ENCODE measurements at regions of chr7 and their contacts with region 1.

Region 1: DNA sequence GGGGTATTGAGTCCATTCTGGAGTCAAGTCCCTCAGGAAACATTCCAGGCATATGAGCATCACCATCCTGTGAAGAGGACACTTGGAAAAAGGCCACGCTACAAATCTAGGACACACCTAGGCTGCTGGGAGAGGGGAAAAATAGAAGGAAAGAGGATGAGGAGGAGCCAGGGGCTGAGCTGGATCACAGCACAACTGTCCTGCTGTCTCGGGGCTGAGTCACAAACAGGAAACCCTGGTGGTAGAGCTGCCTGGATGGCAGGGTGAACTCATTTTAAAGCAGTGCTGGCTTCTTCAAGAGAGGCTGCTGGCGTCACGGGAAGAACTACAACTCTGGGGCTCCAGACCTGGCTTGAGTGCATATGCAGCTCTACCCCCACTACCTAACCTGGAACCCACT is 151.5 kb downstream of the RNF216 start:
- DNase-seq: peak; percentile 86
- H3K4me3 ChIP-seq: no peak overlapping the region
- H3K27ac ChIP-seq: peak overlapping the region; percentile 82
- H3K4me1 ChIP-seq: peaks cover 29% of the 10 kb centered on the region
- H3K27me3 ChIP-seq: no peaks in the 10 kb centered on the region
- CTCF ChIP-seq: peak in 1 of 2 donors; percentile 9

Region 2: GRCh38 chr7:5580714-5581395 is 49.1 kb before region 1 on chr7:
- CTCF ChIA-PET with region 1: no interaction called
- dilution Hi-C with region 1: no loop called
- in situ Hi-C with region 1: no loop called
- intact Hi-C with region 1: no loop called
- DNase-seq: no peak
- H3K4me3 ChIP-seq: no peak overlapping the region
- H3K27ac ChIP-seq: no peak overlapping the region
- H3K4me1 ChIP-seq: no peaks in the 10 kb centered on the region
- H3K27me3 ChIP-seq: no peaks in the 10 kb centered on the region
- CTCF ChIP-seq: no peak

Region 3: DNA sequence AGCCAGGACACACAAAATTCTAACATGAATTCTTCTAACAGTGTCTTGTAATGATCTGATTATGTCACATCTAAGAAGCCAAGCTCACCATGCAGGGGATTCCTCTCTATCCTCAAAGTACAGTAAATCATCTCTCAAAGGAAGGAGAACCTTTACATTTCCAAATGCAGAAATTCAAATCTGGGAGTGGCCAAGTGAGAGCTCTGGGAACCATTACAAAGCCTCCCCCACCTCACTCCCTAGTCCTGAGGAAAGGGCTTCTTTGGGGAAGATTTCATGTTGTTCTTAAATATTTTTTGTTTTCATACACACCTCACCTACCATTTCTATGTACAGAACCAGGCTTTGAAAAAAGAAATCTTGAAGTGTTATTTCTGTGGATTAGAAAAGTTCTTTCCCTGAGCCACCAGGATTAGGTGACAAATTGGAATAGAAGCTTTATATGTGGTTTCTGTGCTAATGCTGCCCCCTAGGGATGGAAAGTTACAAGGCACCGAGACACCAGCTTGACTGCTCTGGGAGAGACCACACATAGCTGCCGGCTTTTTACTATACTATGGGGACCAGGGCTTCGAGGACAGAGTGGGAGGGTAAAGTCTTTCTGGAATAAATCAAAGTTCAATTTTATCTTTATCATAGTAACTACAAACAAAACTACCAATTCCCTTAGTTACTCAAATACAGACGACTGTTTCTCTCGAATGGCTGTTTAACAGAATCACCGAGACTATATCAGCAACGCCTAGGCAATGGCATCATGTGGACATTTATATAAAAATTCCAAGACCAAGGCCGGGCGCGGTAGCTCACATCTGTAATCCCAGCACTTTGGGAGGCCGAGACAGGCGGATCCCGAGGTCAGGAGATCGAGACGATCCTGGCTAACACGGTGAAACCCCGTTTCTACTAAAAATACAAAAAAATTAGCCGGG is 35.4 kb after region 1 on chr7:
- CTCF ChIA-PET with region 1: no interaction called
- dilution Hi-C with region 1: loop called (anchors 5 kb)
- in situ Hi-C with region 1: no loop called
- intact Hi-C with region 1: loop called (anchors 1 kb)
- DNase-seq: peak; percentile 61
- H3K4me3 ChIP-seq: no peak overlapping the region
- H3K27ac ChIP-seq: no peak overlapping the region
- H3K4me1 ChIP-seq: no peaks in the 10 kb centered on the region
- H3K27me3 ChIP-seq: no peaks in the 10 kb centered on the region
- CTCF ChIP-seq: peak; percentile 87 to 89

Region 4: GRCh38 chr7:5689118-5689517 is 59.2 kb after region 1 on chr7:
- CTCF ChIA-PET with region 1: no interaction called
- dilution Hi-C with region 1: no loop called
- in situ Hi-C with region 1: no loop called
- intact Hi-C with region 1: no loop called
- DNase-seq: no peak
- H3K4me3 ChIP-seq: no peak overlapping the region
- H3K27ac ChIP-seq: no peak overlapping the region
- H3K4me1 ChIP-seq: peaks cover 47% of the 10 kb centered on the region
- H3K27me3 ChIP-seq: no peaks in the 10 kb centered on the region
- CTCF ChIP-seq: no peak

Region 5: DNA sequence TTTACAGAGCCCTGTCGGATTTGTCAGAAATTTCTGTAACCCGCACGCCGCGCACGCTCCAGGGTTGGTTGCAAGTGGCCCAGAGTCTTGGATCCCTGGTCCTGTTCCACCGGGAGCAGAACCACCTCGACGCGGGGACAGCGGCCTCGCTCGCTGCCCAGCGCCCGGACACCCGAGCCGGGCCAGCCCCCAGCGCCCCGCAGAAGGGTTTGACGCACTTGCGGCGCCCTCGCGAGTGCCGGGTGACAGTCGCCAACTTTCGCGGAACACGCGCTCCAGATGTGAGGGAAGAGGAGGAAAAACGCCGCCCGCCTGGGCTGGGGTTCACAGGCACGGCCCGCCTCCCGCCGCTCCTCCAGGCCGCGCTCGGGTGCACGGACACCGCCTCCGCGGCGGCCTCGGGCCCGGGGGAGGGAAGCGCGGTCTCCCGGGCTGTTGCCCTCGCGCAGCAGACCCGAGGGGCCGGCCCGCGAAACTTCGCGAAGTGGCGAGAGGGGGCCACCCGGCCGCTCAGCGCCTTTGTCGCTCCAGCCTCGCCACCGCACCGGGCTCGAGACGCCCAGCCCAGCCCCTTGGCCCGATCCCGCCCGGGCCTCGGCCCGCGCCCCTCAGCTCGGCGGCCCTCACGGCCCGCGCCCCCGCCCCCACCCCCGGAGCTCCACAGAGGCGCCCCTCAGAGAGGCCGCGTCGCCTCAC is 151.0 kb after region 1 on chr7:
- CTCF ChIA-PET with region 1: no interaction called
- dilution Hi-C with region 1: no loop called
- in situ Hi-C with region 1: no loop called
- intact Hi-C with region 1: no loop called
- DNase-seq: peak; percentile 42
- H3K4me3 ChIP-seq: peak overlapping the region; percentile 52 to 83 (median 71)
- H3K27ac ChIP-seq: peak overlapping the region; percentile 51
- H3K4me1 ChIP-seq: peaks cover 6% of the 10 kb centered on the region
- H3K27me3 ChIP-seq: no peaks in the 10 kb centered on the region
- CTCF ChIP-seq: no peak